Colonic mucosa (tissue), 4 donors: ENCODE measurements at regions of chr17 and their contacts with region 1.

Region 1: GRCh38 chr17:39754161-39754951 is 16.6 kb downstream of the GRB7 start:
- DNase-seq: peak; percentile 94
- H3K4me3 ChIP-seq: peak overlapping the region; percentile 51
- H3K27ac ChIP-seq: peak overlapping the region; percentile 81
- H3K4me1 ChIP-seq: no peaks in the 10 kb centered on the region
- H3K27me3 ChIP-seq: no peaks in the 10 kb centered on the region
- CTCF ChIP-seq: peak; percentile 94

Region 2: GRCh38 chr17:39553341-39553945 is 200.9 kb before region 1 on chr17:
- intact Hi-C with region 1: loop called (anchors 5 kb)
- DNase-seq: no peak
- H3K4me3 ChIP-seq: no peak overlapping the region
- H3K27ac ChIP-seq: no peak overlapping the region
- H3K4me1 ChIP-seq: no peaks in the 10 kb centered on the region
- H3K27me3 ChIP-seq: no peaks in the 10 kb centered on the region
- CTCF ChIP-seq: no peak